Pancreas (tissue), 10 donors: ENCODE measurements at regions of chr19 and their contacts with region 1.

Region 1: GRCh38 chr19:39328046-39328705 is 7.5 kb upstream of the LRFN1 start:
- DNase-seq: peak; percentile 68 to 98 (median 88)
- ATAC-seq: peak; percentile 77 to 96 (median 92)
- H3K4me3 ChIP-seq: no peak overlapping the region
- H3K27ac ChIP-seq: no peak overlapping the region
- H3K4me1 ChIP-seq: no peaks in the 10 kb centered on the region
- H3K27me3 ChIP-seq: no peaks in the 10 kb centered on the region
- CTCF ChIP-seq: peak; percentile 92 to 96 (median 94)

Region 2: DNA sequence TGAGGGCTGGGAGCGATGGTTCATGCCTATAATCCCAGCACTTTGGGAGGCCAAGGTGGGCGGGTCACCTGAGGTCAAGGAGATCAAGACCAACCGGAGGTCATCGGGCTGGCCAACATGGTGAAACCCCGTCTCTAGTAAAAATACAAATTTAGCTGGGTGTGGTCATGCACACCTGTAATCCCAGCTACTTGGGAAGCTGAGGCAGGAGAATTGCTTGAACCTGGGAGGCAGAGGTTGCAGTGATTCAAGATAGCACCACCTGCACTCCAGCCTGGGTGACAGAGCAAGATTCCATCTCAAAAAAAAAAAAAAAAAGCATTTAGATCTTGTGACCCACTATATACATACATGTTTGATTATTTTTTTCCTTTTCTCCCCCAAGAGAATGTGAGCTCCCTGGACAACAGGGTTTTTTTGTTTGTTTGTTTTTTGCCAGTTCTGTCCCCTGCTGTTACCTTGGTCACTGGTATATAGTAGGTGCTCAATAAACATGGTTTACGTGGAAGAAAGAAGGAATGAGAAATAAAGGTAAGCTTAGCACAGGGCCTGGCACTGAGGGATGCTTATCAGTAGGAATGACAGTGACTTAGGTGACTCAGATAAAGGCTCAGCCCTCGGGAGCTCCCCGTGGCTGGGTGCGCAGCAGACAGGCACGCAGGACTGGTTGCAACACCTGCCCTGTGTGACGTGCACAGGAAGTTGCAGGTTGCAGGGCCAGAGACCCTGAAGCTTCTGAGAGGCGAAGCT is 213.2 kb before region 1 on chr19:
- intact Hi-C with region 1: loop called in 2 of 3 experiments (anchors 5 kb)
- DNase-seq: no peak
- ATAC-seq: no peak
- H3K4me3 ChIP-seq: no peak overlapping the region
- H3K27ac ChIP-seq: no peak overlapping the region
- H3K4me1 ChIP-seq: peaks cover 0 to 4% (median 0%) of the 10 kb centered on the region in 3 donors
- H3K27me3 ChIP-seq: no peaks in the 10 kb centered on the region
- CTCF ChIP-seq: no peak

Region 3: GRCh38 chr19:39124136-39124764 is 203.9 kb before region 1 on chr19:
- intact Hi-C with region 1: loop called in 2 of 3 experiments (anchors 5 kb)
- DNase-seq: no peak
- ATAC-seq: no peak
- H3K4me3 ChIP-seq: no peak overlapping the region
- H3K27ac ChIP-seq: no peak overlapping the region
- H3K4me1 ChIP-seq: peaks cover 18 to 29% (median 26%) of the 10 kb centered on the region in 3 donors
- H3K27me3 ChIP-seq: no peaks in the 10 kb centered on the region
- CTCF ChIP-seq: no peak

Region 4: GRCh38 chr19:39212375-39212742 is 115.8 kb before region 1 on chr19:
- intact Hi-C with region 1: loop called in 1 of 3 experiments (anchors 10 kb)
- DNase-seq: peak in 1 of 6 donors; percentile 47
- ATAC-seq: peak in 1 of 4 donors; percentile 16
- H3K4me3 ChIP-seq: no peak overlapping the region
- H3K27ac ChIP-seq: no peak overlapping the region
- H3K4me1 ChIP-seq: peaks cover 3 to 11% (median 8%) of the 10 kb centered on the region in 3 donors
- H3K27me3 ChIP-seq: no peaks in the 10 kb centered on the region
- CTCF ChIP-seq: peak in 1 of 4 donors; percentile 15

Region 5: DNA sequence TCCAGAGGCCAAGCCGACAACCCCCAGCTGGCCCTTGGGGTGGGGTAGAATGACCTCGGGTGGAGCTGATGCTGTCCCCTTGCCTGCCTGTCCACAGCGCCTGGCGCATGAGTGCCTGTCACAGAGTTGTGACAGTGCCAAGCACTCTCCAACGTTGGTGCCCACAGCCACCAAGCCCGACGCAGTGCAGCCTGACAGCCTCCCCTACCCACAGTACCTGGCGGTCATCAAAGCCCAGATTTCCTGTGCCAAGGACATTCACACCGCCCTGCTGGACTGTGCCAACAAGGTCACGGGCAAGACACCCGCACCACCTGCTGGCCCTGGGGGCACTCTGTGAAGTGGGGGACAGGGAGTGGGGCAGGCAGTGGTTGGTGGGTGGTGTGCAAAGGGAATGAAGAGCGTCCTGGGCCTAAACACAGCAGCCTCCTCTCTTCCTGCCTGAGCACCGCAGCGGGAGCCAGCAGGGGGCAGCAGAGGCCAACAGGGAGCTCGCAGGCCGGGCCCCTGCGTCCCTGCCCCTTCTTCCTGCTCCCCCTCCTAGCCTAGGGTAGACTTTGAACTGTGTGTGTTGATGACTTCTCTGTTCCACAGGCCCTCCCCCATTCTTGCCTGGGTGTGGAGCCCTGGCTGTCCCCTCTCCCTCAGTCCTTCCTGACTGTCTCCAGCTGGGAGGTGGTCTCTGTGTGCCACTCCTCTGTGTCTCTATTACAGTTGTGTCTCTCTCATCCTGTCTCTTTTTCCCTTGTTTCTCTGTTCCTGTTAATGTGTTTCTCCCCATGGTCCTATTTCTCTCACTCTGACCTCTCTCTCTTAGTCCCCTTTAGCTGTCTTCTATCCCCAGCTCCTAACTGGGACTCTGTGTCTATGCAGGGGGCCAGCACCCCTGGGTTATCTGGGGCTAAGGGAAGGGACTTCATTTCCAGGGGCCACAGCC is 69.5 kb after region 1 on chr19:
- intact Hi-C with region 1: no loop called
- DNase-seq: peak; percentile 83 to 98 (median 91)
- ATAC-seq: peak; percentile 79 to 86 (median 84)
- H3K4me3 ChIP-seq: no peak overlapping the region
- H3K27ac ChIP-seq: peak overlapping the region; percentile 46 to 85 (median 66)
- H3K4me1 ChIP-seq: peaks cover 6 to 25% (median 15%) of the 10 kb centered on the region in 3 donors
- H3K27me3 ChIP-seq: no peaks in the 10 kb centered on the region
- CTCF ChIP-seq: peak; percentile 91 to 96 (median 94)